Activated CD4-positive, alpha-beta T cell treated with anti-CD3 and anti-CD28 coated beads for 36 hours (primary cell): ENCODE measurements at regions of chr4 and their contacts with region 1.

Region 1: DNA sequence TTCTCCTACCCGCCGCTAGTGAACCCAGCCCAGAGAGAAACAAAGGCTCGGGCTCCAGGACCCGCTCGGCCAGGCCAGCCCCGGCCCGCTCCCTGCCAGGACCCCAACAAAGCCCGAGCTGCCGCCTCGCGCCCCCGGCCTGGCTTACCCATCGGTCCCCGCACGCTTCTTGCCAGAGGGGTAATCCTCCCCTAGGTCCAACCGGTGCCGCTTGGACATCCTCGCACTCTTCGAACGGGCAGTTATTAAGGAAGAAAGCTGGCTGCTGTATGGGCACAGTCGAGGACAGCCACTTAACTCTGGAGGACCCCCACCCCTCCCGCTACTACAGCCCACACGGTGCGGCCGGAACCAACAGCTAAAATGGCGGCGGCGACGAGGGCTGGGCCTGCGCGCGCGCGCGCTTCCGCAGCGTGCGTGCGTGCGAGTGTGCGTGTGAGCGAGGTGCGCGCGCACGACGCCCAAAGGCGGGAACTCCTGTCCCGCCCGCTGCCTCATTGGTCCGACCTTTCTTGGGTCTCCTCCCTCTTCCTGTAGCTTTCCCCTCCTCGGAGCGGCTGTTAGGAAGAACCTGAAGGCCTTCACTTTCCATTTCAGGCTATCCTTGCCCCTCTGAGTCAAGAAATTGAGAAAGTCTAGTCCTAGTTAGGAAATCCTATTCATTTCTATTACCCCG is at the start of gene DHX15:
- DNase-seq: peak; percentile 96
- ATAC-seq: peak; percentile 94
- H3K4me3 Mint-ChIP-seq: peak within 1 kb of the TSS; percentile 94
- H3K27ac Mint-ChIP-seq: peak within 1 kb of the TSS; percentile 99
- H3K4me1 Mint-ChIP-seq: peaks cover 33% of the 10 kb centered on the region
- H3K27me3 Mint-ChIP-seq: no peaks in the 10 kb centered on the region
- total RNA-seq, gene DHX15: 201 to 210 TPM

Region 2: DNA sequence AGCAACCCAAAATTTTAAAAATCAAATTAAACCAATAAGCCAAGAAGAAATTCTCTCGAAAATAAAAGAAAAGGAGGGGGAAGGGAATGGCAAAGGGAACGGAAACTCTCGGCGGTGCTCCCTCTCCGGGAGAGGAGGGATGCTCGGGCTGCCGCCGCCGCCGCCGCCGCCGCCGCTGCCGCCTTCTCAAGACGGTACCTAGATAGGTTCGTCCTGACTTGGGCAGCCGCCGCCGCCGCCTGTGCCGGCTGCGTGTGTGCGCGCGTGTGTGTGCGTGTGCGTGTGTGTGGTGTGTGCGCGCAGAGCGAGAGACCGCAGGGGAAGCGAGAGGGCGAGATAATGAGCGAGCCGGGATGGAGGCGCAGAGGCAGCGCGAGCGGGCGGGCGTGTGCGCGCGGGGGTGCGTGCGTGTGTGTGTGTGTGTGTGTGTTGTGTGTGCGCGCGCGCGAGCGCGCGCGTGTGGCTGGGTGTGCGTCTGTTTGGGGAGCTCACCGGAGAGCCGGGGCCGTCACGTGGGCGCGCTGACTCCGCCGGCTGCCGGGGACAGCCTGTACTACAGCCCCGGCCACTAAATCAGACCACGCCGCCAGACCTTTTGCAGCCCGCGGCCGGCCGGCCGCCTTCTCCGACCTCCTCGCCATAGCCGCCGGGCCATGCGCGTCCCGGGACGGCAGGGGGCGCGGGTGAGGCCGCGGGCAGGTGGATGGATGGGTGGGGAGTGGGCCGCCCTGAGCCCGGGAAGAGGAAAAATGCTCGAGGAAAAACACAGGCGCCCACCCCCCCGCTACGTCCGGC is 111.6 kb before region 1 on chr4:
- CTCF ChIA-PET with region 1: interaction called, 5 read pairs
- POLR2A ChIA-PET with region 1: no interaction called
- intact Hi-C with region 1: loop called in 1 of 2 experiments (anchors 1 kb)
- DNase-seq: peak; percentile 75
- ATAC-seq: peak; percentile 54
- H3K4me3 Mint-ChIP-seq: peak overlapping the region; percentile 79
- H3K27ac Mint-ChIP-seq: peak overlapping the region; percentile 64
- H3K4me1 Mint-ChIP-seq: peaks cover 29% of the 10 kb centered on the region
- H3K27me3 Mint-ChIP-seq: peaks cover 58% of the 10 kb centered on the region

Region 3: GRCh38 chr4:24537025-24537424 is 47.3 kb before region 1 on chr4:
- CTCF ChIA-PET with region 1: no interaction called
- POLR2A ChIA-PET with region 1: no interaction called
- intact Hi-C with region 1: loop called (anchors 1 to 5 kb)
- DNase-seq: no peak
- ATAC-seq: no peak
- H3K4me3 Mint-ChIP-seq: no peak overlapping the region
- H3K27ac Mint-ChIP-seq: no peak overlapping the region
- H3K4me1 Mint-ChIP-seq: peaks cover 5% of the 10 kb centered on the region
- H3K27me3 Mint-ChIP-seq: no peaks in the 10 kb centered on the region

Region 4: DNA sequence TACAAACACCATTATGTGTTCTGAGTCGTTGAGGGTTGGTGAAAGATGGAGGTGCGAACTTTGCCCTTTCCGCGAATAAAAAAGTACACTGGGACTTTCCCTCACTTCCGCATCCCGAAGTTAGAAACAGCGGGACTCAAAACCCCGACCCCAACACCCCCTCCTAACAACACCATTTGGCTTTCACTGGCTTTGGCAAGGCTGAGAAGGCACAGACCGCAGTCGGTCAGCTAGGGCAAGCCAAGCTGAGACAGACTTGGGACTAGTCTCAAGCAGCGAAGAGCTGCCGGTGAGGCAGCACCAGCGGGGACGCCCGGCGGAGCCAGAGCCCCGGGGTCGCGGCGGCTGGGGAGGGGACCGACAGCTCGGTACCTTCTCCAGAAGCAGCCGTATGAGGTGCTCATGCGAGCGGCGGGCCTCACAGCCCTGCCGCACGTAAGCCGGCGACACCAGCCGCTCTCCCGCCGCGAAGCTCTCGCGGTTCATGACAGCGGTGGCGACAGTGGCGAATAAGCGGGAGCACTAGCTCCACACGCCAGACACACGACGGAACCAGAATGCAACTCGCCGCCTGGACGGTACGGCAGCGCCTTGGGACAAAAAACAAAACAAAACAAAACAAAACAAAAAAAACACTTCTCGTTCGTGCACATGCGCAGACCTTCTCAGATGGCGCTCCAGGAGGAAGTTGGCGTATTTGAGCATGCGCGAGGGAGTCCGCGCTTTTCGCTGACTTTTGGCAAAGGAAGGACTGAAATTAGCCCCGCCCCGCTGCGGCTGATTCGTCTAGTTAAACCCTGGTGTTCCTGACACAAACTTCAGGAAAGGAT is 575.8 kb after region 1 on chr4 and contains the start of gene SEPSECS:
- CTCF ChIA-PET with region 1: no interaction called
- POLR2A ChIA-PET with region 1: interaction called, 3 read pairs
- intact Hi-C with region 1: loop called in 1 of 2 experiments (anchors 1 kb)
- DNase-seq: peak; percentile 96
- ATAC-seq: peak; percentile 90
- H3K4me3 Mint-ChIP-seq: peak within 1 kb of the TSS; percentile 85
- H3K27ac Mint-ChIP-seq: peak within 1 kb of the TSS; percentile 91
- H3K4me1 Mint-ChIP-seq: peaks cover 37% of the 10 kb centered on the region
- H3K27me3 Mint-ChIP-seq: no peaks in the 10 kb centered on the region
- total RNA-seq, gene SEPSECS: 10.4 to 15.4 TPM

Region 5: DNA sequence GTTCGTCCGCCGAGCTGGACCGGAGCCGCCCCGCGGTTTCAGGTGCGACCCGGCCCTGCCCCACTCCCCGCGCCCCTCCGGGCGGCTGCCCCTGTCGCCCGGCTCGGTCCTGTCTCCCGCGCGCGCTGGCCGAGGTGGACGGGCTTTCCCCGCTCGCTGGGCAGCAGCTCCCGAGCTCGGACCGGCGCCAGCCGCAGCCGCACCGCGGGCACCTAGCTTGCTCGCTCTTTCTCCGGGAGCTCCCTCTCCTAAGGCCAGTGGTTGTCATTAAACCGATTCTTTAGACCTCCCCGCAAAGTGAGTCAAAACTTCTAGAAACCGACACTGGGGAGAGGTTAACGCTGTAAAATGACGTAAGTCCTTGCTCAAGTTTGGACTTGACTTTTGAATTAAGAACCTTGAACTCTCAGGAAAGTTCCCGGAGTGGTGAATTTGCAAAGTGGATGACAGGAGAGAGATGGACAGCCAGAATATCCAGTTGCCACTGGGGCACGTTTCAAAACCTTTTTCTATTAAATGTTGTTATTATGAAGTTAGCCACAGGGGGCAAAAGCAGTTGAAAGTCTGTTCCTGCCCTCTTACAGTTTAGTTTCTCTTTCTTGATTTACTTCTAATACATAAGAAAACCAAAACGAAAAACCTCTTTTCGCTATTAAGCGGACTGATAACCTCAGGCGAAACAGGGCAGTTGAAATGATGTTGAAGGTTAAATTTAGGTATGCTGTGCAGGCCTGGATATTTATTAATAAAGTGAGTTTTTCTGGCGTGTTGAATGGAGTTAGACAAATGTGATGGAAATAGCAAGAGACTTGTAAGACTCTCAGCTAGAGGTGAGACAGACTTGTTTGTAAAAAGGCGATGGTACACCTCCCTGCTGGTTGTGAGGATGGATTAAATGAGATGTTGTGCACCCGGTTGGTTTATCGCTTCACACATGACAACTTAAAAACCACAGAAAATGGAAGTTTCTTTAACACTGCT is 650.4 kb after region 1 on chr4:
- CTCF ChIA-PET with region 1: no interaction called
- POLR2A ChIA-PET with region 1: interaction called, 4 read pairs
- intact Hi-C with region 1: loop called (anchors 1 to 5 kb)
- DNase-seq: peak; percentile 58
- ATAC-seq: peak; percentile 62
- H3K4me3 Mint-ChIP-seq: peak overlapping the region; percentile 91
- H3K27ac Mint-ChIP-seq: peak overlapping the region; percentile 97
- H3K4me1 Mint-ChIP-seq: peaks cover 45% of the 10 kb centered on the region
- H3K27me3 Mint-ChIP-seq: no peaks in the 10 kb centered on the region

Region 6: GRCh38 chr4:25376754-25377571 is 792.6 kb after region 1 on chr4 and contains the start of gene ANAPC4:
- CTCF ChIA-PET with region 1: no interaction called
- POLR2A ChIA-PET with region 1: no interaction called
- intact Hi-C with region 1: loop called (anchors 1 kb)
- DNase-seq: peak; percentile 99
- ATAC-seq: peak; percentile 98
- H3K4me3 Mint-ChIP-seq: no peak within 1 kb of the TSS
- H3K27ac Mint-ChIP-seq: peak within 1 kb of the TSS; percentile 74
- H3K4me1 Mint-ChIP-seq: peaks cover 8% of the 10 kb centered on the region
- H3K27me3 Mint-ChIP-seq: no peaks in the 10 kb centered on the region
- total RNA-seq, gene ANAPC4: 19.2 to 31.2 TPM